Cardiac septum (tissue), 1 donor: ENCODE measurements at regions of chr6 and their contacts with region 1.

Region 1: GRCh38 chr6:17281100-17281494 is at the start of gene RBM24:
- DNase-seq: no peak
- total RNA-seq, gene RBM24: 221 TPM

Region 2: DNA sequence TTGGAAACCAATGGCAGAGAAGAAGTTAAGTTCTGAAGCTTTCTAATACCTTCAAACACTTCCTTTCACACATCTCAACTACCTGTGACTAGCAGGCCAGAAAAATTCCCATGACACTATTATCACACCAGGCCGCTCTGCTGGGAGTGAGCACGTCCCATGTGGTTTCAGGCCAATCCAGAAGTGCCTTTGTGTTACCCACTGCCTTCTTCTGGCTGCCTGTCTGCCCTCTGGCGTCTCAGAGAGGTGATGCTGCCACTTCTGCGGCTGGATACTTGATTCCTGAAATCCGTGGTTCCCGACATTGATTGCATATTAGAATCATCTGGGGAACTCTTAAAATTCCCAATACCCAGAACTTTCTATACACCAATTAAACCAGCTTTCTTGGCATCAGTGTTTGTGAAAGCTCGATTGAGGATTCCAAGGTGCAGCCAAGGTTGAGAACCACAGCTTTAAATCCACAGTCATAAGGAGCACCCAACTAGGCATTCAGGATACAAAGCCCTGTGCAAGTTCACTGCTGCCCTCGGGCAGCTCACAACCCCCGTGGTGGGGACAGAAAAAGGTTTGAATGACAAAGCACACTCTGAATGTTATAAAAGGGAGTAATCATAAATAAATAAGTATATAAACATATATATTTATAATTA is 113.6 kb before region 1 on chr6:
- intact Hi-C with region 1: loop called (anchors 2 kb)
- DNase-seq: peak; percentile 79

Region 3: GRCh38 chr6:17212546-17213371 is 68.3 kb before region 1 on chr6:
- intact Hi-C with region 1: loop called (anchors 5 kb)
- DNase-seq: peak; percentile 77